ENCODE measurements at regions of chr18 and their contacts with region 1.

Region 1: DNA sequence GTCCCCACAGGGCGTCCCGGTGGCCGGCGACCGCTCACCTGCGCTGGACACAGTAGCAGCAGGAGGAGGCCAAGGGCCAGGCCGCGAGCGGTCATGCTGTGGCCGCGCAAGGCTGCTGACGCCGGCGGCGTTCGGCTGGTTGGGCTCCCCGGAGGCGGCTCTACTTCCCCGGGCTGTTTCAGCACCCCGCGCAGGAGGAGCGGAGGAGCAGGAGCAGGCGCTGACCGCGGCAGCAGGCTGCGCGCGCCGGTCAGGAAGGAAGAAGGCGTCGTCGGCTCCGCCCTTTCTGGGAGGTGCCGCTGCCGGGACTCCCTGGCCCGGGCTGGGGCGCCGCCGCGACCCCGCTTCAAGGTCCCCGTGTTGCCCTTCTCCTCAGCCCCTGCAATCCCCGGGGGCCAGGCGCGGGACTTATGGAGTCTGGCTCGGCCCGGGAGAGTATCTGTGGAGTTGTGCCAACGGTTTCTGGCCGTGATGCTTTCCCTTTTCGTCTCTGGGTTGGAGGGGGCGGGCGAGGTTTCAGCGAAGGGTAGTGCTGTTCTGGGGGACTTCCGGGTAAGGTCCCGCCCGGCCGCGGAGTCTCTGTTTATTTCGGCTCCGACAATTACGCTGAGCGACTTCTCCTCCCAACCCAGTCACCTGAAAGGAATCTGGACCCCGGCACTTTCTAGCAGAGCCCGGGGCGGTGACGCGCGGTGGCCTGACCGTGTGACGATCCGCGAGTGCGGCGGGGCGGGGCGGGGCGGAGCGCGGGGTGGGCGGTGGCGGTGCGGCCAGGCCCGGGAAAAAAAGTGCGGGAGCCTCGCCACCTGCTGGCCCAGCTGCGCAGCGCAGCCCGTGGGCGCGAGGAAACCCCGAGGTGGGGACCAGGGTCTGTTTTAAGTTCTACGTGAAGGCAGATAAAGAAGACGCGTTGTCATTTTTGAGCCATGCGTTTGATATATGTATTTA is at the start of gene NPC1:
- DNase-seq: peak; percentile 92
- H3K4me3 Mint-ChIP-seq: peak within 1 kb of the TSS; percentile 92
- H3K27ac Mint-ChIP-seq: peak within 1 kb of the TSS; percentile 94
- H3K4me1 Mint-ChIP-seq: peaks cover 39% of the 10 kb centered on the region
- H3K27me3 Mint-ChIP-seq: peaks cover 5% of the 10 kb centered on the region
- total RNA-seq, gene NPC1: 29.0 and 31.4 TPM in 2 replicates

Region 2: GRCh38 chr18:23452728-23453679 is 133.5 kb before region 1 on chr18 and contains the start of gene RIOK3:
- intact Hi-C with region 1: loop called (anchors 5 kb)
- DNase-seq: peak; percentile 92
- H3K4me3 Mint-ChIP-seq: peak within 1 kb of the TSS; percentile 92
- H3K27ac Mint-ChIP-seq: peak within 1 kb of the TSS; percentile 88
- H3K4me1 Mint-ChIP-seq: peaks cover 35% of the 10 kb centered on the region
- H3K27me3 Mint-ChIP-seq: peaks cover 6% of the 10 kb centered on the region
- total RNA-seq, gene RIOK3: 53.4 and 55.4 TPM in 2 replicates

Region 3: DNA sequence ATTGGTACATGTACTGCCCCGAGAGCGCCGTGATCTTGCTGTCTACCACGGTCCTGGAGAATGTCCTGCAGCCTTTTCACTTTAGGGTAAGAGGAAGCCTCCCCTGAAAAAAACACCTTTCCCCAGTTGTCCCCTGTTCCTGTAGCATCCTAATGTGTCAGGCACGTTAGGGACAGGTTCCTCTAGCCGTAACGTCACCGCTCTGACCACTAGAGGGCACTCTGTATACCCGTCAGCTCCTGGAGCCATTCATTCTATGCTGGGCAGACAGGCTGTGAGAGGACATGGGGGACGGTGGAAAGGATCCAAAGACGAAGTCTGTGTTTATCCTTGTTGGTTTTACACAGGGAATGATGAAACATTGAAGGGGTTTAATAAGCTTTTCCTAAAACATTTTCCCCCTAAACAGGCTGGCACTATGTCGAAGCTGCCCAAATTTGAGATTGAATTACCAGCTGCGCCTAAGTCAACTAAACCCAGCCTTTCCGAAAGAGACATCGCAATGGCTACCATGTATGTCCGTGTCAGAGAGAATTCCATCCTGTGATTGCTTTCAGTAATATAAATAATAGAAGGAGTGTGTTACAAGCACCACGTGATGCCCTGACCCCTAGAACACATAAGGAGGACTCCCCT is 70.5 kb before region 1 on chr18:
- intact Hi-C with region 1: loop called (anchors 1 kb)
- DNase-seq: peak; percentile 69
- H3K4me3 Mint-ChIP-seq: no peak overlapping the region
- H3K27ac Mint-ChIP-seq: peak overlapping the region; percentile 62
- H3K4me1 Mint-ChIP-seq: peaks cover 13% of the 10 kb centered on the region
- H3K27me3 Mint-ChIP-seq: no peaks in the 10 kb centered on the region

Region 4: GRCh38 chr18:23540867-23541266 is 45.7 kb before region 1 on chr18:
- intact Hi-C with region 1: loop called (anchors 2 kb)
- DNase-seq: peak; percentile 26
- H3K4me3 Mint-ChIP-seq: no peak overlapping the region
- H3K27ac Mint-ChIP-seq: peak overlapping the region; percentile 44
- H3K4me1 Mint-ChIP-seq: peaks cover 35% of the 10 kb centered on the region
- H3K27me3 Mint-ChIP-seq: no peaks in the 10 kb centered on the region

Region 5: GRCh38 chr18:23563377-23564043 is 23.0 kb before region 1 on chr18:
- intact Hi-C with region 1: loop called (anchors 2 kb)
- DNase-seq: no peak
- H3K4me3 Mint-ChIP-seq: no peak overlapping the region
- H3K27ac Mint-ChIP-seq: peak overlapping the region; percentile 49
- H3K4me1 Mint-ChIP-seq: peaks cover 8% of the 10 kb centered on the region
- H3K27me3 Mint-ChIP-seq: no peaks in the 10 kb centered on the region

Region 6: DNA sequence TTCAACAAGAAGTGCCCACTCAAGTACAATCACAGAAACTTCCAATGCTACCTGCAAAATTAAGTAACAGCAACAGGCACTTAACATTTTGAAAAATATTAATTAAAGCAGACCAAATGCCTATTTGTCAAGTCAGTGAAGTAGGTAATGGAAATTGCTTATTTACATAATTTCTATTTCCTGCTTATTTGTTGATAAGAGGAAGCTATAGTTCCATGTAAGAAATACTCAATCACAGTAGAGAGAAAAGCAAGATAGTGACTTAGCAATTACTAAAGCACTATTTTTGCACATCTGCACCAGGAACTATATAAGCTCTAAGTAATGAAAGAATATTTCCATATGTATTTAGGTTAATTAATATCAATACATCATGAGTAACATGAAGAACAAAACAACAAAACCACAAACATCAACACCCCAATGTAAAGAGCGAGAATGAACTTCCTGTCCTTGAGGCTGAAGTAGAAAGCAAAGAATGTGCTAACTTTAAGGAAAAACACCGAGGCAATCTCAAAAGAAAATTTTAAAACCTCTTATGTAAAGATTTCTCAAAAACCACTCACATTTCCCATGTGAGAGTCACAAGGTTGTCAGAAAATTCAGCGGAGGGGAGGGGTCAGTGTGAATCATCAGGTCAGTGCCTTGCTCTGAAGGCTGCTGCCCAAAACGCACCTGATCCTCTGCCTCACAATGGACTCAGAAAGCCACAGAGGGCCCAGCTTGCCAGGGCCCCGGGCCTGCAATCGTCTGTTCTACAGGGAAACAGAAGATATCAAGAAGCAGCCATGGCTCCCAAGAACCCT is 12.7 kb before region 1 on chr18:
- intact Hi-C with region 1: loop called (anchors 1 kb)
- DNase-seq: no peak
- H3K4me3 Mint-ChIP-seq: peak overlapping the region; percentile 46
- H3K27ac Mint-ChIP-seq: peak overlapping the region; percentile 77
- H3K4me1 Mint-ChIP-seq: peaks cover 29% of the 10 kb centered on the region
- H3K27me3 Mint-ChIP-seq: no peaks in the 10 kb centered on the region

Region 7: GRCh38 chr18:23844991-23845680 is 258.6 kb after region 1 on chr18:
- intact Hi-C with region 1: no loop called
- DNase-seq: no peak
- H3K4me3 Mint-ChIP-seq: no peak overlapping the region
- H3K27ac Mint-ChIP-seq: no peak overlapping the region
- H3K4me1 Mint-ChIP-seq: no peaks in the 10 kb centered on the region
- H3K27me3 Mint-ChIP-seq: peaks cover 12% of the 10 kb centered on the region